Common myeloid progenitor, CD34-positive (primary cell): ENCODE measurements at regions of chr11 and their contacts with region 1.

Region 1: DNA sequence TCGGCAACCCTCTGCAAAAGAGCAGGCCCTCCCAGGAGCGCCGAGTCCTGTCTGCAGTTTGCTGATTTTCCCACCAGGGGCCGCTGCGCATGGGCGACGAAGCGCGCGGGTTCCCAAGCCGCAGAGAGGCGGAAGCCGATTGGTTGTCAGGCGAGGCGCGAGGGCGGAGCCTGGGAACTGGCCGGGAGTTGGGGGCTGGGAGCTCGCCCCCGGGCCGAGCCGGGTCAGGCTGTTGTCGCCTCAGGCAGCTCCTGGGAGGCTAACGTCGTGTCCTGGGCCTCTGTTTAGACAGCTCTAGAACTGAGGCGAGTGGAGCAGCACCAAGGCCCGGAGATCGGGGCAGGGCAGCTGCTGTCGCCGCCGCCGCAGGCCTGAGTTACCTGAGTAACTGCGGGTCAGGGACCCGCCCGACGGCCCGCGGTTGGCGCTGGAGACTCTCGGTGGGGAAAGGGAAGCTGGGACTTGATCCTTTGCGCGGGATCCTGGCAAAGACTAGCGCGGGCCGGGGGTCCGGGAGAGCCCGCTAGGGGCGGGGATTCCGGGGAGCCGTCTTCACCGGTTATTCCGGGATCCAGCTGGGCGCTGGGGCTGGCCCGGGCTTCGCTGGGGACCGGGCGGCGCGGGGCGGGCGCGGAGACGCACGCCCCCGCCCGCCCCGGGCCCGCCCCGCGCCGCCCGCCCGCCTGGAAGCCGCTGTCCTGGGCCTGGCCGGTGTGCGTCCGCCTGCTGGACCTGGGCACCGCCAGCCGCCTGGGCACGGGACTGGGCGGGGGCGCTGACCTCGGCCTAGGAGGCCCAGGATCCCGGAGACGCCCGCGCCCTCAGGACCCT is at the start of gene STIM1:
- DNase-seq: peak; percentile 96 to 99 (median 98)
- H3K4me3 ChIP-seq: peak within 1 kb of the TSS; percentile 80 to 95 (median 88)
- H3K27ac ChIP-seq: peak within 1 kb of the TSS; percentile 72 to 89
- H3K4me1 ChIP-seq: peaks cover 32 to 67% (median 50%) of the 10 kb centered on the region in 4 experiments
- H3K27me3 ChIP-seq: no peaks in the 10 kb centered on the region

Region 2: GRCh38 chr11:3841426-3842350 is 13.5 kb before region 1 on chr11:
- CTCF ChIA-PET with region 1: interaction called, 314 read pairs
- POLR2A ChIA-PET with region 1: interaction called, 24 read pairs
- DNase-seq: peak; percentile 95 to 99 (median 98)
- H3K4me3 ChIP-seq: peak overlapping the region in 6 of 7 experiments; percentile 40 to 89 (median 57)
- H3K27ac ChIP-seq: peak overlapping the region; percentile 88 to 92
- H3K4me1 ChIP-seq: peaks cover 20 to 44% (median 42%) of the 10 kb centered on the region in 4 experiments
- H3K27me3 ChIP-seq: no peaks in the 10 kb centered on the region

Region 3: GRCh38 chr11:3880724-3881123 is 25.5 kb after region 1 on chr11:
- CTCF ChIA-PET with region 1: interaction called, 35 read pairs
- POLR2A ChIA-PET with region 1: interaction called, 7 read pairs
- DNase-seq: no peak
- H3K4me3 ChIP-seq: peak overlapping the region in 1 of 7 experiments; percentile 48
- H3K27ac ChIP-seq: peak overlapping the region in 1 of 2 experiments; percentile 63
- H3K4me1 ChIP-seq: peaks cover 25 to 68% (median 40%) of the 10 kb centered on the region in 4 experiments
- H3K27me3 ChIP-seq: no peaks in the 10 kb centered on the region

Region 4: GRCh38 chr11:3894128-3894731 is 39.0 kb after region 1 on chr11:
- CTCF ChIA-PET with region 1: interaction called, 17 read pairs
- POLR2A ChIA-PET with region 1: no interaction called
- DNase-seq: peak; percentile 55 to 86 (median 82)
- H3K4me3 ChIP-seq: peak overlapping the region in 2 of 7 experiments; percentile 9 to 44
- H3K27ac ChIP-seq: peak overlapping the region; percentile 36 to 80
- H3K4me1 ChIP-seq: peaks cover 7 to 43% (median 20%) of the 10 kb centered on the region in 4 experiments
- H3K27me3 ChIP-seq: no peaks in the 10 kb centered on the region

Region 5: DNA sequence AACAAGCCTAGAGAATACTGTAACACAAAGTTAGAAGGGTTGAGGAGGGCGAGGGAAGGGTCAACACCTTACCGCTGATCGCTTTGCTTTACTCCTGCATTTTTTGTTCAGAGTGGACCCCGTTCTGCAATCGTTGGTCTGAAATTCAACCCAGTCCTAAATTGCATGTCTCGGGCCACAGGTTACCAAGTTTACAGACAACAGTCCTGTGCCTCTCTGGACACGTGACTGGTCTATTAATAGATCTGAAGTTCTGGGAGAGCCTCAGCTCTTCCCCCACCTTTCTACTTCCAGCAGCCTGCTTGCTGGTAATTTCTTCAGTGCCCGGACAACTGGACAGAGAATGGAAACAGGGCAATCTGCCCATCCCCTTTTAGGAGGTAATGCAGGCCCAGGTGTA is 74.5 kb after region 1 on chr11:
- CTCF ChIA-PET with region 1: interaction called, 22 read pairs
- POLR2A ChIA-PET with region 1: no interaction called
- DNase-seq: no peak
- H3K4me3 ChIP-seq: no peak overlapping the region
- H3K27ac ChIP-seq: no peak overlapping the region
- H3K4me1 ChIP-seq: peaks cover 6 to 22% (median 10%) of the 10 kb centered on the region in 4 experiments
- H3K27me3 ChIP-seq: no peaks in the 10 kb centered on the region

Region 6: GRCh38 chr11:3959015-3959919 is 104.1 kb after region 1 on chr11:
- CTCF ChIA-PET with region 1: interaction called, 22 read pairs
- POLR2A ChIA-PET with region 1: no interaction called
- DNase-seq: peak in 1 of 3 donors; percentile 43
- H3K4me3 ChIP-seq: no peak overlapping the region
- H3K27ac ChIP-seq: no peak overlapping the region
- H3K4me1 ChIP-seq: peaks cover 0 to 18% (median 5%) of the 10 kb centered on the region in 4 experiments
- H3K27me3 ChIP-seq: no peaks in the 10 kb centered on the region

Region 7: DNA sequence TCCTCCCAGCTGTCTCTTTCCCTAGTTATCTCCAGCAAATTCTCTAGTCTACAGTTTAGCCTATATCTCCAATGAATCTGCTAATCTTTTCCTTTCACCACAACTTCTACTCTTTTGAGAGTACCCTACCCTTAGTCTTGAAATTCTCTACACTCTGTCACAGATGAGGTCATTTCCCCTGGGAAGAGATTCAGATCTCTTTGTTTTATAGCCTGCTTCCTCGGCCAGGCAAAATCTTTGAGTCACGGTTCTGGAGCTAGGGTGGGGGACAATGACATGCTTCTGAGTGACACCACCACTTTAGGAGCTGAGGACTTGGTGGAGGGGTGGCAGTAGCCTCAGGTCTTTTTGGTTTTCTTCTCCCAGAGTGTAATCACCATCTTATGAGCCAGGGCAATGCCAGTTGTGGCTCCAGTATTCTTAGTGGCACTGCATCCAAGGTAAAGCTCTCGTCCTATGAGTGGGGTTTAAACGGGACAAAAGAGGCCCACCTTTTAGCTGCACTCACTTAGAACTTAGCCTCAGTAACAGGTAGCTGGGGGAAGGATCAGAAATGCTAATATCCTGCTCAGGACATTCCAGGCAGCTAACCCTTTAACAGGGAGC is 140.9 kb after region 1 on chr11:
- CTCF ChIA-PET with region 1: interaction called, 11 read pairs
- POLR2A ChIA-PET with region 1: no interaction called
- DNase-seq: peak; percentile 81 to 89 (median 83)
- H3K4me3 ChIP-seq: peak overlapping the region in 1 of 7 experiments; percentile 25
- H3K27ac ChIP-seq: peak overlapping the region; percentile 9 to 75
- H3K4me1 ChIP-seq: peaks cover 0 to 10% (median 8%) of the 10 kb centered on the region in 4 experiments
- H3K27me3 ChIP-seq: no peaks in the 10 kb centered on the region